Activated T-helper 1 cell treated with anti-CD3 and anti-CD28 coated beads, Interleukin-12 subunit alpha, Interleukin-12 subunit beta, Interleukin-2, Interleukin-4 antibody, amounts not matched to agents 30 ng/mL and 10 ng/mL and 1 ng/mL, durations not matched to agents 14 hours and 24 hours and 36 hours (primary cell): ENCODE measurements at regions of chr2 and their contacts with region 1.

Region 1: DNA sequence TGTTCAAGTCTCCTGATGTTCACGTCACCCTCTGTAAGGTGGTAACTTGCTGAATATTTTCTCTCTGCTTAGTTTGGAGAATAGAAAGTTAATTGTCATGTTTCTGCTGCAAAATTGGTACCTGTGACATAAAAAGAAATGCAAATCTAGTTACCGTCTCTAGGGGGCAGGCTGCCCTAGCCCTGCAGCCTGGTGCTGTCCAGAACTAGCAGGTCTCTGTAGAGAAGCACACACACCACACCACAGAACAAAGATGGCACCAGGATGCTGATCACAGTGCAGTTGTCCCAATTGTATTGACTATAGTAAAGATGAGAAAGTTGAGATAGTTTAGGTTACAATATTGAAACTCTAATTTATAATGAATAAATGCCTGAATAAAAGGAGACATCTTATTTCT is 47.0 kb downstream of the SLC9A4 start:
- DNase-seq: no peak
- H3K4me3 Mint-ChIP-seq: no peak overlapping the region
- H3K27ac Mint-ChIP-seq: no peak overlapping the region
- H3K4me1 Mint-ChIP-seq: no peaks in the 10 kb centered on the region
- H3K27me3 Mint-ChIP-seq: peaks cover 5% of the 10 kb centered on the region

Region 2: GRCh38 chr2:102509749-102510148 is 10.3 kb before region 1 on chr2:
- intact Hi-C with region 1: loop called (anchors 1 kb)
- DNase-seq: no peak
- H3K4me3 Mint-ChIP-seq: no peak overlapping the region
- H3K27ac Mint-ChIP-seq: no peak overlapping the region
- H3K4me1 Mint-ChIP-seq: peaks cover 8% of the 10 kb centered on the region
- H3K27me3 Mint-ChIP-seq: peaks cover 5% of the 10 kb centered on the region

Region 3: DNA sequence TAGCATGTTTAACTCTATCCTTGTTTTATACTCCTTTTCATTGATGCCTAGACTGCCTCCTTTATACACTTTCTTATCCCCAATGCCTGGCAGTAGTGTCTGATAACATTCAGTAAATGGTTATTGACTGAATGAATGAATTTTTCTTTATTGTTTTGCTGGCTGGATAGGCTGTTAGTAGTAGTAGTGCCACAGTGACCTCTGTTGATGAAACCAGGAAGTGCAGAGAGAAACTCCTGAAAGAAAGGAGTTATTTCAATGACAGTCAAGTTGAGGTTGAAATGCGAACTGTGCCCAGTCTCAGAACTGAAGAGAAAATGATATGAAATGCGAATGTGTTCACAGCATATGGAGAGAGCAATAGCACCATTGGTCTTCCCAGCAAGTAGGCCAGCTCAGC is 72.6 kb after region 1 on chr2:
- intact Hi-C with region 1: loop called (anchors 5 kb)
- DNase-seq: no peak
- H3K4me3 Mint-ChIP-seq: no peak overlapping the region
- H3K27ac Mint-ChIP-seq: no peak overlapping the region
- H3K4me1 Mint-ChIP-seq: no peaks in the 10 kb centered on the region
- H3K27me3 Mint-ChIP-seq: peaks cover 12% of the 10 kb centered on the region

Region 4: GRCh38 chr2:102615622-102616436 is 95.8 kb after region 1 on chr2:
- intact Hi-C with region 1: loop called (anchors 1 kb)
- DNase-seq: no peak
- H3K4me3 Mint-ChIP-seq: no peak overlapping the region
- H3K27ac Mint-ChIP-seq: no peak overlapping the region
- H3K4me1 Mint-ChIP-seq: peaks cover 9% of the 10 kb centered on the region
- H3K27me3 Mint-ChIP-seq: peaks cover 56% of the 10 kb centered on the region

Region 5: GRCh38 chr2:102703748-102704147 is 183.7 kb after region 1 on chr2:
- intact Hi-C with region 1: loop called (anchors 1 kb)
- DNase-seq: no peak
- H3K4me3 Mint-ChIP-seq: no peak overlapping the region
- H3K27ac Mint-ChIP-seq: no peak overlapping the region
- H3K4me1 Mint-ChIP-seq: no peaks in the 10 kb centered on the region
- H3K27me3 Mint-ChIP-seq: peaks cover 17% of the 10 kb centered on the region

Region 6: DNA sequence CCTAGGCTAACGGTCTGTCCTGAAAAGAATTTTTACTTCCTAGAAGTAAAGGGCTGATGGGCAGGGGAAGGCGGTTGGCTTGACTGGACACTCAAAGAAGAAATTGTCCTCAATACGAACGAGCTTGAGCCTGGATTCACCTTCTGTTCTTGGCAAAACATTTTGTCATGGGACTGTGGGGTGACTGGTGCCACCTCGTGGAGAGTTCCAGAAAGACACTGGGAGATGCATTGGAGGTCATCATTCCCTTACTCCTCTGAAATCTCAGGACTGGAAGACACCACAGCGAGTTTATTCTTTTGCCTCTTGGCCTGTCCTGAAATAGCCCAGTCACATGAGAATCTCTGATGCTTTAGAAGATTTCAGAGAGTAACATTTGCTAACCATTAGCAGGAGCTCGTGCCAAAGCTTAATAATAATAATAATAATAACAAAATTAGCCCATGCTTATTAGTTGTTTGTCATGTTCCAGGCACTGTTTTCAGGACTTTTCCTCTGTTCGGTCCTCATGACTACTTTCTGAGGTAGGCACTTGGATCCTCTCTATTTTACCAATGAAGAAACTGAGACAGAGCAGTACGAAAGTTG is 286.3 kb after region 1 on chr2:
- intact Hi-C with region 1: loop called (anchors 2 kb)
- DNase-seq: no peak
- H3K4me3 Mint-ChIP-seq: no peak overlapping the region
- H3K27ac Mint-ChIP-seq: no peak overlapping the region
- H3K4me1 Mint-ChIP-seq: peaks cover 9% of the 10 kb centered on the region
- H3K27me3 Mint-ChIP-seq: peaks cover 2% of the 10 kb centered on the region